Calu3 (cell line): ENCODE measurements at regions of chr2 and their contacts with region 1.

Region 1: DNA sequence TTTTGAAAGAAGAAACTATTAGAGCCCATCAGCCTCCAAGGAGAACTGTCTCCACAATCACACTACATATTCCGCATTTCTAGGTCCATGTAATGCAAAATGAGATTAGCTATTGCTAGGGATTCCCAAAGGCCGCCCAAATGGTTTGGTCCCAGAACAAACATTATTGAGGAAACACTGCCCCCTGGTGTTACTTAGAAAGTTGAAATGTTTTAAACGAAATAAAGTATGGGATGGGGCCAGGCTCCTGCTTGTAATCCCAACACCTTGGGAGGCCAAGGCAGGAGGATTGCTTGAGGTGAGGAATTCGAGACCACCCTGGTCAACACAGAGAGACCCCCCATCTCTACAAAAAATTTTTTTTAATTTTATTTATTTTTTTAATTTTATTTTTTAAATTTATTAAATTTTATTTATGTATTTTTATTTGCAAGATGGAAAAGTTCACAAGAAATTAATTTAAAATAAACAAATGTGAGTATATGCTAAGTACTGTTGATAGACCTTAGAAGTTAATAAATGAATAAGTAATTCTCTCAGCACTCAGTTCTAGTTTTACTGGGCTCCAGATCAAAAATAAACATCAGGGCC is 5.5 kb downstream of the NHEJ1 start:
- DNase-seq: peak; percentile 60
- H3K4me3 Mint-ChIP-seq: no peak overlapping the region
- H3K27ac Mint-ChIP-seq: no peak overlapping the region
- H3K4me1 Mint-ChIP-seq: no peaks in the 10 kb centered on the region
- H3K27me3 Mint-ChIP-seq: no peaks in the 10 kb centered on the region
- CTCF ChIP-seq: peak; percentile 81

Region 2: DNA sequence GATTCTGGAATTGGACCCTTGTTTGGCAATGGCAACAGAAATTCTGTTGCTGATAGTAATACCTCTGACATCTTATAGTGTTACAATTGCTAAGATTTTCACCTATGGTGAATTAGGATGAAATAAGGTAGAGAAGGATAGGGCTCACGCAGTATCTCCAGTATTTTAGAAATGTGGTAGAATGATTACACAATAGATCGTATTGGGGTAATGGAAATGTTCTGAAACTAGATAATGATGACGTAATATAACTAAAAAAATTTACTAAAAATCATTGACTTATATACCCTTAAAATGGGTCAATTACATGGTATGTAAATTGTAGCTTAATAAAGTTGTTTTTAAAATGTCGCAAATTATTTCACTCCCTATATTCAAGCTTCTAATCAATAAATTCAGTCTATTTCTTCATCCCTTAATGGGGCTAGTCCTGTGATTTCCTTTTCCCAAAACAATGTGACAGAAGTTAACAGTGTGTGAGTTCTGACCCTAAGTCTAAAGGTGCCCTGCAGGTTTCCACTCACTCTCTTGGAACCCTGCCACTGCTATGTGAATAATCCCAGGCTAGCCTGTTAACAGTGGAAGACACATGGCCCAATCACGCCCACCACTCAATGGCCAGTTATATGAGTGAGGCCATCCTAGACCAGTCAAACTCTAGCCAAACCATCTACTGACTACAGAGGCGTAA is 618.2 kb before region 1 on chr2:
- CTCF ChIA-PET with region 1: no interaction called
- intact Hi-C with region 1: no loop called
- DNase-seq: no peak
- H3K4me3 Mint-ChIP-seq: no peak overlapping the region
- H3K27ac Mint-ChIP-seq: no peak overlapping the region
- H3K4me1 Mint-ChIP-seq: no peaks in the 10 kb centered on the region
- H3K27me3 Mint-ChIP-seq: no peaks in the 10 kb centered on the region
- CTCF ChIP-seq: no peak

Region 3: DNA sequence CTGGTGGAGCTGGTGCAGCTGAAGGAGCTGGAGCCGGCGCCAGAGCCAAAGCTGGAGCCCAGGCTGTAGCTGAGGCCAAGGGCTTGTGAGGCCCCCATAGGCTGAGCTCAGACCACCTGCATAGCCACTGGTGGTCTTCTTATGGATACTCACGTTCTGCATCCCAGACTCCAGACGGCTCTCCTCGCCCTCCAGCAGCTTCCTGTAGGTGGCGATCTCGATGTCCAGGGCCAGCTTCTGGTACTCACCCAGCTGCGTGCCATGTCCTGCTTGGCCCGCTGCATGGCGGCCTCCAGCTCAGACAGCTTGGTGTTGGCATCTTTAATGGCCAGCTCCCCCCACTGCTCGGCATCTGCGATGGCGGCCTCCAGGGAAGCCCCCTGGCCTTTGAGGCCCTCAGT is 201.7 kb before region 1 on chr2:
- CTCF ChIA-PET with region 1: no interaction called
- intact Hi-C with region 1: no loop called
- DNase-seq: no peak
- H3K4me3 Mint-ChIP-seq: no peak overlapping the region
- H3K27ac Mint-ChIP-seq: no peak overlapping the region
- H3K4me1 Mint-ChIP-seq: peaks cover 15% of the 10 kb centered on the region
- H3K27me3 Mint-ChIP-seq: peaks cover 61% of the 10 kb centered on the region
- CTCF ChIP-seq: no peak

Region 4: GRCh38 chr2:218979846-218980734 is 175.1 kb before region 1 on chr2:
- CTCF ChIA-PET with region 1: interaction called, 17 read pairs
- intact Hi-C with region 1: no loop called
- DNase-seq: peak; percentile 92
- H3K4me3 Mint-ChIP-seq: peak overlapping the region; percentile 51
- H3K27ac Mint-ChIP-seq: no peak overlapping the region
- H3K4me1 Mint-ChIP-seq: peaks cover 28% of the 10 kb centered on the region
- H3K27me3 Mint-ChIP-seq: peaks cover 91% of the 10 kb centered on the region
- CTCF ChIP-seq: peak; percentile 93

Region 5: DNA sequence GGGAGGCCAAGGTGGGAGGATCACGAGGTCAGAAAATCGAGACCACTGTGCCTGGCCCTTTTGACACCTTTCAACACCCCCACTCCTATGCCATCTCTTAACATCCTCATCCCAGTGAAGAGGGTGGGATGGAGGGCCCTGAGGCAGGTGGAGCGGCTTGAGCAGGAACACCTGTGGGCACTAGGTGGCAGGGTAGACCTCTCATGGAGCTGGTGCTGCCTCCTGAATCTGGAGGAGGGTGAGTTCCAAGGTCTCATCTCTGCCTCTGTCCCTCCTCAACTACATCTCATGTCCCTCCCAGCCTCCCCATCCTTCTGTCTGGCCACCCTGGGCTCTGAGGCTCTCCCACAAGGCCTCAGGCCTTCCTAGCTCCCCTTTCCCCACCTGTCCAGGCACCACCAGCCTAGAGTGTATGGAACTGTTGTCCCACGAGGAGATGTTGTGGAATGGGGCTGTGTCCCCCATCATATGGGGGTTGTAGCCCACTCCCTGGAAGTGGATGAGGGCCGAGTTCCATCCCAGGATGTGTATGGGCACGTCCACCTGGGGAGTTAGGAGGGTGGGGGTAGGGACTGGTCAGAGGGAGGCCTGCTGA is 144.9 kb before region 1 on chr2:
- CTCF ChIA-PET with region 1: interaction called, 10 read pairs
- intact Hi-C with region 1: loop called (anchors 1 kb)
- DNase-seq: peak; percentile 73
- H3K4me3 Mint-ChIP-seq: no peak overlapping the region
- H3K27ac Mint-ChIP-seq: no peak overlapping the region
- H3K4me1 Mint-ChIP-seq: no peaks in the 10 kb centered on the region
- H3K27me3 Mint-ChIP-seq: peaks cover 40% of the 10 kb centered on the region
- CTCF ChIP-seq: peak; percentile 71

Region 6: DNA sequence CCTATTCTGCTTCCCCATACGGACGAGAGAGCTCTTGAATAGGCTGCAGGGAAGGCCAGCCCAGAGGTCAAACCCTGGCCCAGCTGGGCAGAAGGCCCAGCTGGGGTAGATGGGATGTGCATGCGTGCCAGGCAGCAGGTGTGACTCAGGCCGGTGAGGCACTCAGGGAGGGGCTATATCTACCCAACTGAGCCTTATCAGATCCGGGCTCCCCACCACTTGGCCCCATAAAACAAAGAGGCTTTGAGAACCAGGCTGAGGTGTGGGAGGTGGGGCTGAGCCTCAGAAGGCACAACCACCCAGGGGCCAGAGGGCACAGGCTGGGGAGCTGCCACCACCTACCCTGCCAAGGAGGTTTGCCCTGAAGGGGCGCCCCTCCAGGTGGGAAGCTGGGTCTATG is 105.9 kb before region 1 on chr2:
- CTCF ChIA-PET with region 1: interaction called, 11 read pairs
- intact Hi-C with region 1: no loop called
- DNase-seq: peak; percentile 91
- H3K4me3 Mint-ChIP-seq: peak overlapping the region; percentile 25
- H3K27ac Mint-ChIP-seq: peak overlapping the region; percentile 55
- H3K4me1 Mint-ChIP-seq: peaks cover 48% of the 10 kb centered on the region
- H3K27me3 Mint-ChIP-seq: no peaks in the 10 kb centered on the region
- CTCF ChIP-seq: no peak

Region 7: DNA sequence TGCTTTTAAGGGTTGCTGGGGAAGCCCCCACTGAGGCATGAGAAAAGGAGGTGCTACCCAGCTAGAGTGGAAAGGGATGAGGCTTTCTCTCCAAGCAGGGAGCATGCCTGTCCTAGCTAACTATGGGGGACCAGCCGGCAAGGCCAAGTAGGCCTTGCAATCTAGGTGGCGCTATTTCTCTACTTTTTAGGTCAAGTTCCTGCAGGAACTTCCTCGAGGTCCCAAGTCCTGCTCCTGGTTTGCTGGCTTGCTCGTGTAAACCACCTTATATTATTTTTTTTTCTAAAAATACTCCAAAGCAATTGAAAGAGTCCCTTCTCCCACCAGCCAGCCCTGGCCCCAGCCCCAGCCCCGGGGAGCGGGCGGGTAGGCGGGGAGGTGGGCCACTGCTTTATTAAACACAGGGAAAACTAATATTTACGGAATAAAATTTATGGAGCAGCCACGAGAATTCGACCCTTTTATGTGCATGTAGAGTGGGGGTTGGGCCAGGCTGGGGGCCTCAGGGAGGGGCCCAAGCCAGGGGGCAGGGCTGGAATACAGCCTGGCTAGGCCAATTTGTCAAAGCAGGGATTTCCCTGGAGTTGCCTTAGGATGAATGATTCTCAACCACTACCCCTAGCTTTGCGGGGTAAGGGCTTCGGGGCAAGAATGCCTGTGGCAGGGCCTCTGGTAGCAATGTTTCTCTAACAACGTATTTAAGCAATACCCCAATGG is 81.6 kb before region 1 on chr2:
- CTCF ChIA-PET with region 1: interaction called, 10 read pairs
- intact Hi-C with region 1: no loop called
- DNase-seq: peak; percentile 58
- H3K4me3 Mint-ChIP-seq: no peak overlapping the region
- H3K27ac Mint-ChIP-seq: no peak overlapping the region
- H3K4me1 Mint-ChIP-seq: peaks cover 24% of the 10 kb centered on the region
- H3K27me3 Mint-ChIP-seq: no peaks in the 10 kb centered on the region
- CTCF ChIP-seq: peak; percentile 77

Region 8: DNA sequence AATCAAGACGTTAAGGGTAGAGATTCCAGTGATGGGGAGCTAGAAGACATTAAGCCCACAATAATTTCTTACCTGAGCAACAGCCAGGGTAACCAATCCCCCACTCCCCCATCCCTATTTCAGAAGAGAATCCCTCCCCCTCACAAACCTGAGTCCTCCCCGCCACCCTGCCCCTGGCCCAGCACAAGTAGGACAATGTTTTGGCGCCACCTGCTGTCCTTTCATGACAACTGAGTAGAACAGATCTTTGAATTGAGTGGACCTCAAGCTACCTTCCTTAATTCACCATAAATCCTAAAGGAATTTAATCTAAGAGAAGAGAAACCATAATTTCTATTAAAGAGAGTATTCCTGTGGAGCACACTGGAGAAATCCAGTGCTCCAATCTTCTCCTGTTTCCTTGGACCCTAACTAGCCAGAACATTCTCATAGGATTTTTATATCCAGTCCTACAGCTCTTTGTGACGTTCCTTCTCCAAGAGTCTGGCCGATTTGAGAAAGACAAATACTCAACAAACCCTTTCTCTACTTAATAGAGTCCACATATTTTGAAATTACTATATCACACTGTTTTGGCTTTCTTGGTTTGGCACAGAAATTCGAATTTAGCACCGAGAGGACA is 35.6 kb before region 1 on chr2:
- CTCF ChIA-PET with region 1: interaction called, 19 read pairs
- intact Hi-C with region 1: loop called (anchors 5 kb)
- DNase-seq: peak; percentile 75
- H3K4me3 Mint-ChIP-seq: no peak overlapping the region
- H3K27ac Mint-ChIP-seq: no peak overlapping the region
- H3K4me1 Mint-ChIP-seq: peaks cover 38% of the 10 kb centered on the region
- H3K27me3 Mint-ChIP-seq: no peaks in the 10 kb centered on the region
- CTCF ChIP-seq: peak; percentile 46